A549 (cell line): ENCODE measurements at regions of chr2 and their contacts with region 1.

Region 1: GRCh38 chr2:63698825-63699548 is 110.2 kb downstream of the MDH1 start:
- DNase-seq: peak; percentile 60 to 93
- ATAC-seq: peak; percentile 98
- H3K4me3 ChIP-seq: no peak overlapping the region
- H3K27ac ChIP-seq: peak overlapping the region; percentile 66 to 80
- H3K4me1 ChIP-seq: peaks cover 20% of the 10 kb centered on the region
- CTCF ChIP-seq: peak; percentile 73
- EP300 ChIP-seq: no peak
- POLR2A ChIP-seq: no peak; the same call in 1 of the 2 replicates
- RAD21 ChIP-seq: peak; percentile 74 to 77

Region 2: GRCh38 chr2:63588385-63589147 is 110.4 kb before region 1 on chr2 and contains the starts of genes MDH1 and WDPCP:
- CTCF ChIA-PET with region 1: no interaction called
- POLR2A ChIA-PET with region 1: interaction called, 10 read pairs
- DNase-seq: peak; percentile 89 to 100
- ATAC-seq: peak; percentile 94 to 97
- H3K4me3 ChIP-seq: peak within 1 kb of the TSS; percentile 93
- H3K27ac ChIP-seq: peak within 1 kb of the TSS; percentile 78 to 92
- H3K4me1 ChIP-seq: peaks cover 24% of the 10 kb centered on the region
- CTCF ChIP-seq: no peak
- EP300 ChIP-seq: no peak
- POLR2A ChIP-seq: peak; percentile 74
- RAD21 ChIP-seq: no peak
- polyA plus RNA-seq, gene MDH1: 425 and 450 TPM in 2 replicates
- polyA plus RNA-seq, gene WDPCP: 6.8 and 7.6 TPM in 2 replicates

Region 3: GRCh38 chr2:63643486-63643885 is 55.5 kb before region 1 on chr2:
- CTCF ChIA-PET with region 1: no interaction called
- POLR2A ChIA-PET with region 1: no interaction called
- DNase-seq: no peak
- ATAC-seq: no peak
- H3K4me3 ChIP-seq: no peak overlapping the region
- H3K27ac ChIP-seq: no peak overlapping the region
- H3K4me1 ChIP-seq: no peaks in the 10 kb centered on the region
- CTCF ChIP-seq: no peak
- EP300 ChIP-seq: no peak
- POLR2A ChIP-seq: no peak
- RAD21 ChIP-seq: no peak

Region 4: GRCh38 chr2:63669596-63669995 is 29.4 kb before region 1 on chr2:
- CTCF ChIA-PET with region 1: no interaction called
- POLR2A ChIA-PET with region 1: no interaction called
- DNase-seq: no peak
- ATAC-seq: no peak
- H3K4me3 ChIP-seq: no peak overlapping the region
- H3K27ac ChIP-seq: no peak overlapping the region
- H3K4me1 ChIP-seq: no peaks in the 10 kb centered on the region
- CTCF ChIP-seq: no peak
- EP300 ChIP-seq: no peak
- POLR2A ChIP-seq: no peak
- RAD21 ChIP-seq: no peak

Region 5: DNA sequence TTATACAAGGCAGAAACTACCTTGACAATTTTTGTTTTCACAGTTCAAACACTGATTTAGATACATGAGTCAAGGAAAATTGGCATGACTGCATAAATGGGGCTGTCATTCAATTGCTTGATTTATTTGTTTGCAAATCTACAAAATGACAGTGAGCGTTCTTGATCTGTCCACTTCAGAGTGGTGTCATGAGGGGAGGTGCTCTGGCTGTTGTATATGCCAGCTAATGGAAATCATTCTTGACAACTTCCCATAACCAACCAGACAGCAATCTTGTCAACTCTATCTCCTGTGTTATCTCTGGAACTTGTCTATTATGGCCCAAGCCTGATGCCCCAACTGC is 22.1 kb after region 1 on chr2:
- CTCF ChIA-PET with region 1: interaction called, 10 read pairs
- POLR2A ChIA-PET with region 1: no interaction called
- DNase-seq: no peak
- ATAC-seq: peak in 1 of 2 experiments; percentile 62; a peak in 3 of 6 replicates
- H3K4me3 ChIP-seq: no peak overlapping the region
- H3K27ac ChIP-seq: no peak overlapping the region
- H3K4me1 ChIP-seq: peaks cover 12% of the 10 kb centered on the region; the same call in 2 of the 3 replicates
- CTCF ChIP-seq: no peak
- EP300 ChIP-seq: no peak
- POLR2A ChIP-seq: no peak
- RAD21 ChIP-seq: no peak

Region 6: DNA sequence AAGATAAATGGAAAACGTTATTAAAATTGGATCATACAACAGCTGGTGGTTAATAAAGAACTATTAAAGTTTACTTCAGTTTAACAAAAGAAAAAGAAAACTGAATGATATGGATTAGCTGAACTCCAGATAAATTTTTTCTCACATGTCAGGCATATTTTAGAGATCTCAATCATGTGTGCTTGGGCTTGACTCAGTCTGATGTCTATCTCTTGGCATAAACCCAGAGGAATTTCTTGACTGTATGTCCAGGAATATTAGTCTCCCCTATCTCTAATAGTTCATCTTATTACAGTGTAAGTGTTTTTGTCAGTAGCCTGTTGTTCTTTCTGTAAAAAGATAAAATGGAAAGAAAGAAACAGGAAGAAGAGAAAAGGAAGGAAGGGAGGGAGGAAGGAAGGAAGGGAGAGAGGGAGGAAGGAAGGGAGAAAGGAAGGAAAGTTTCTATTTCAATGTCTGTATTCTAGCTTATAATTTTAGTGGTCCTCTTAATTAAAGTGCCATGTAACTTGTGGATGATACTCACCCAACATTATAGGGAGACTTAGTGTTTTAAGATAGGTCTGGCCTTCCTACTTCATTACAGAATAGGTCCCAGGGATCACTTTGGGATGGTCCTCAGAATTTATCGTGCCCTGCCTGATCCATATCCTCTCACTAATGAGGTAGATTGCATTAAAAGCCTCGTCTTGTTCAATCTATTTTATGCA is 43.0 kb after region 1 on chr2:
- CTCF ChIA-PET with region 1: interaction called, 35 read pairs
- POLR2A ChIA-PET with region 1: interaction called, 11 read pairs
- DNase-seq: peak in 1 of 2 experiments; percentile 29
- ATAC-seq: peak; percentile 54 to 72; a peak in 4 of 6 replicates
- H3K4me3 ChIP-seq: no peak overlapping the region
- H3K27ac ChIP-seq: peak overlapping the region; percentile 37 to 51; a peak in 5 of 6 replicates
- H3K4me1 ChIP-seq: peaks cover 60% of the 10 kb centered on the region
- CTCF ChIP-seq: no peak
- EP300 ChIP-seq: no peak
- POLR2A ChIP-seq: no peak
- RAD21 ChIP-seq: no peak

Region 7: DNA sequence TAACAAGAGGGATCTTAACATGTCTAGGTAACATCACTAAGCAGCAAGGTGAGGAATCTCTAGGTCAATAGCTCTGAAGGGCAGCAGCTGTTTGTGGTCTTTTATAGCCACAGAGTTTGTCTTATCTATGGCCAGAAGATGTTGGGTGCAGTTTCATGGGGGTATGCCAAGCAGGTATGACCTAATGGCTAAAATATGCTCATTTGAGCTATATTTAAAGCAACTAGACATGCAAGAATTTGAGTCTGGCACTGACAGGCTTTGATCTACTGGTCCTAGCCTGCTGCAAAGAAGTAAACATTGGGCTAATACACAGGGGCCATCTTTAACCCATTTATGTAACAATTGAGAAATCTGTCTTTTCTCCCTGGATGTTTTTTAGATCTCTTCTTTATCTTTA is 128.8 kb after region 1 on chr2:
- CTCF ChIA-PET with region 1: interaction called, 10 read pairs
- POLR2A ChIA-PET with region 1: no interaction called
- DNase-seq: peak in 1 of 2 experiments; percentile 32
- ATAC-seq: peak; percentile 66 to 70; a peak in 5 of 6 replicates
- H3K4me3 ChIP-seq: no peak overlapping the region
- H3K27ac ChIP-seq: no peak overlapping the region
- H3K4me1 ChIP-seq: peaks cover 9% of the 10 kb centered on the region
- CTCF ChIP-seq: no peak
- EP300 ChIP-seq: no peak
- POLR2A ChIP-seq: no peak
- RAD21 ChIP-seq: no peak

Region 8: DNA sequence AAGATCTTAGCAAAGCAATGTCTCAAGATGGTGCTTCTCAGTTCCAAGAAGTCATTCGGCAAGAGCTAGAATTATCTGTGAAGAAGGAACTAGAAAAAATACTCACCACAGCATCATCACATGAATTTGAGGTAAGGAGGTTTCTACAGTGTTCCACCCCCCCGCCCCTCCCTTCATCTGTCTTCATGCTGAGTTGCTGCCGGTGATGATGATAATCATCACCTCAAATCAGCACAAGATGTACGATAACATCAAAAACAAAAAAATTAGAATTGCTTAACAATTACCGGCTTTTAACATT is 157.3 kb after region 1 on chr2:
- CTCF ChIA-PET with region 1: interaction called, 94 read pairs
- POLR2A ChIA-PET with region 1: interaction called, 3 read pairs
- DNase-seq: no peak
- ATAC-seq: no peak
- H3K4me3 ChIP-seq: no peak overlapping the region
- H3K27ac ChIP-seq: no peak overlapping the region
- H3K4me1 ChIP-seq: peaks cover 16% of the 10 kb centered on the region
- CTCF ChIP-seq: no peak
- EP300 ChIP-seq: no peak
- POLR2A ChIP-seq: no peak
- RAD21 ChIP-seq: no peak

Region 9: DNA sequence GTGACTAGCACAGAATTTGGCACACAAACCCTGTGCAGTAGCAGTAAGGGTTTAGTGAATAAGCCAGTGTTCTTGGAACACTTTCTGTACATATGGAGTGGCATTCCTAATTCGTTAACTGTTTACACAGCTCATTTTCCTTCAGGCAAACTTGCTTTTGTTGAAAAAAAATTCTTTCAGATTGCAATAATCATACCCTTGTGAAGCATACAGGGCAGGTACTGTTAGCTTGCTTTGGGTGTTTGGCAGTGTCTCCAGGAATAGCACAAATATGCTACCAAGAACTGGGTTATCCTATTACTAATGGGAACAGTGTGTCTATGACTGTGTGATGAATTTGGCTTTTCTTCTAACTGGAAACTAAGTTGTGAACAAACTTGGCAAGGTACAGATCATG is 176.1 kb after region 1 on chr2:
- CTCF ChIA-PET with region 1: interaction called, 38 read pairs
- POLR2A ChIA-PET with region 1: no interaction called
- DNase-seq: no peak
- ATAC-seq: no peak
- H3K4me3 ChIP-seq: no peak overlapping the region
- H3K27ac ChIP-seq: no peak overlapping the region
- H3K4me1 ChIP-seq: peaks cover 20% of the 10 kb centered on the region
- CTCF ChIP-seq: no peak
- EP300 ChIP-seq: no peak
- POLR2A ChIP-seq: no peak
- RAD21 ChIP-seq: no peak